CD4-positive, alpha-beta T cell (primary cell): ENCODE measurements at regions of chr1 and their contacts with region 1.

Region 1: GRCh38 chr1:89641781-89642180 is 8.9 kb downstream of the LRRC8C start:
- DNase-seq: no peak
- ATAC-seq: no peak
- H3K4me3 ChIP-seq: no peak overlapping the region
- H3K4me3 Mint-ChIP-seq: no peak overlapping the region
- H3K27ac ChIP-seq: no peak overlapping the region
- H3K27ac Mint-ChIP-seq: peak overlapping the region; percentile 60
- H3K4me1 ChIP-seq: peaks cover 26% of the 10 kb centered on the region
- H3K4me1 Mint-ChIP-seq: peaks cover 76% of the 10 kb centered on the region
- H3K27me3 ChIP-seq: no peaks in the 10 kb centered on the region
- H3K27me3 Mint-ChIP-seq: no peaks in the 10 kb centered on the region
- CTCF ChIP-seq: no peak

Region 2: DNA sequence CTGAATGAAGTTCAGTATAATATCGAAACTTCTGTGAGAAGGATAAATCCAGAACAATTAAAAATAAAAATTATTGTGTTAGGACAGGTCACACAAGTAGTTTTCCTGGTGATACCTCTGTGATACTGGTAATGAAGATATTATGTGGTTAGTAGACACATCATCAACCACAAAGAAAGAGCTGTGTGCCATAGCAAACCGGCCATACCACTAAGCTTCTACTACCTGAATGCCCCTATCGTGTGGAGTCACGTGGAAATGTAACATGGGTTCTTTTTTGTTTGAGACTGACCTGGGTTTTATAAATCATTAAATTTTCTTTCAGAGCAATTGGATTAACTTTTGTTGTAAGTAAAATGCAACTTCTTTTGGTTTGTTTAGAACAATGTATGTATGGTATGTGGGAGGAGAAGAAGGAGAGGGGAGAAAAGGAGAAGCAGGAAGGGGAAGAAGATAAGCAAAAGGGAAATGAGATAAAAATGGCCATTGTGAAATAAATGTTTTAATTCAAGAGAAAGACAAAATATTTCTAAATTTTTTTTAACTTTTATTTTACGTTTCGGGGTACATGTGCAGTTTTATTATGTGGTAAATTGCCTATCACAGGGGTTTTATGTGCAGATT is 175.4 kb before region 1 on chr1:
- CTCF ChIA-PET with region 1: no interaction called
- POLR2A ChIA-PET with region 1: no interaction called
- intact Hi-C with region 1: no loop called
- DNase-seq: no peak
- ATAC-seq: no peak
- H3K4me3 ChIP-seq: no peak overlapping the region
- H3K4me3 Mint-ChIP-seq: no peak overlapping the region
- H3K27ac ChIP-seq: no peak overlapping the region
- H3K27ac Mint-ChIP-seq: no peak overlapping the region
- H3K4me1 ChIP-seq: peaks cover 6% of the 10 kb centered on the region
- H3K4me1 Mint-ChIP-seq: peaks cover 21% of the 10 kb centered on the region
- H3K27me3 ChIP-seq: peaks cover 6 to 31% of the 10 kb centered on the region in 2 experiments
- H3K27me3 Mint-ChIP-seq: peaks cover 54% of the 10 kb centered on the region
- CTCF ChIP-seq: no peak

Region 3: DNA sequence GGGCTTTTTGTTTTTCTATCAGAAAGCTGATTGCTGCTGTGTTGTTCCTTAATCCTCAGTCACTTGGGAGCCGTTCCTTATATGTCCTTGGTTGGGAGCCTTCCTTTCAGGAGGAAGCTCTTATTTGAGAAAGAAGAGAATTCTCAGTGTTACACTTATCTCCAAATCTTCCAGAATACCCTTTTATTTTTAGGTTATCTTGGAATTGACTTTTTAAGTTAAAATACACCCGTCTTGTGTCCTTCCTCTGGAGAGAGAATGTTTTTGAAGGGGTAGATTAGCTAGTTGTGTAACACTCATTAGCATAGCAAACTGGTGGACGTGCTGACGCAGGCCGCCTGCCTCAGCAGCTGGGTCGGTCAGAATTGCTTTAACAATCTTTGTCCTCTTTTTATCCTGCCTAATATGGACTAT is 75.0 kb before region 1 on chr1:
- CTCF ChIA-PET with region 1: no interaction called
- POLR2A ChIA-PET with region 1: no interaction called
- intact Hi-C with region 1: no loop called
- DNase-seq: no peak
- ATAC-seq: no peak
- H3K4me3 ChIP-seq: no peak overlapping the region
- H3K4me3 Mint-ChIP-seq: no peak overlapping the region
- H3K27ac ChIP-seq: no peak overlapping the region
- H3K27ac Mint-ChIP-seq: no peak overlapping the region
- H3K4me1 ChIP-seq: no peaks in the 10 kb centered on the region
- H3K4me1 Mint-ChIP-seq: peaks cover 60% of the 10 kb centered on the region
- H3K27me3 ChIP-seq: no peaks in the 10 kb centered on the region
- H3K27me3 Mint-ChIP-seq: no peaks in the 10 kb centered on the region
- CTCF ChIP-seq: no peak

Region 4: GRCh38 chr1:89675677-89676076 is 33.9 kb after region 1 on chr1:
- CTCF ChIA-PET with region 1: interaction called, 3 read pairs
- POLR2A ChIA-PET with region 1: no interaction called
- intact Hi-C with region 1: loop called in 1 of 2 experiments (anchors 5 kb)
- DNase-seq: no peak
- ATAC-seq: no peak
- H3K4me3 ChIP-seq: no peak overlapping the region
- H3K4me3 Mint-ChIP-seq: no peak overlapping the region
- H3K27ac ChIP-seq: no peak overlapping the region
- H3K27ac Mint-ChIP-seq: peak overlapping the region; percentile 67
- H3K4me1 ChIP-seq: peaks cover 28% of the 10 kb centered on the region
- H3K4me1 Mint-ChIP-seq: peaks cover 86% of the 10 kb centered on the region
- H3K27me3 ChIP-seq: no peaks in the 10 kb centered on the region
- H3K27me3 Mint-ChIP-seq: no peaks in the 10 kb centered on the region
- CTCF ChIP-seq: no peak

Region 5: DNA sequence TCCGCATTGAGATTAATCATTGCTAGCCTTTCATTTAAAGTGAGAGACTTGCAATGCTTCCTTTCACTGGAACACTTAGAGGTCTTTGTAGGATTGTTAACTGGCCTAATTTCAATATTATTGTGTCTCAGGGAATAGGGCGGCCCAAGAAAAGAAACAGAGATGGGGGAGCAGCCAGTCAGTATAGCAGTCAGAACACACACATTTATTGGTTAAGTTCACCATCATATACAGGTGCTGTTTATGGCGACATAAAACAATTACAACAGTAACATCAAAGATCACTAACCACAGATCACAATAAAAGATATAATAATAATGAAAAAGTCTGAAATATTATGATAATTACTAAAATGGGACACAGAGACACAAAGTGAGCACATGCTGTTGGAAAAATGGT is 1046.0 kb after region 1 on chr1:
- CTCF ChIA-PET with region 1: no interaction called
- POLR2A ChIA-PET with region 1: no interaction called
- intact Hi-C with region 1: no loop called
- DNase-seq: no peak
- ATAC-seq: no peak
- H3K4me3 ChIP-seq: no peak overlapping the region
- H3K4me3 Mint-ChIP-seq: no peak overlapping the region
- H3K27ac ChIP-seq: no peak overlapping the region
- H3K27ac Mint-ChIP-seq: no peak overlapping the region
- H3K4me1 ChIP-seq: no peaks in the 10 kb centered on the region
- H3K4me1 Mint-ChIP-seq: no peaks in the 10 kb centered on the region
- H3K27me3 ChIP-seq: peaks cover 5 to 30% of the 10 kb centered on the region in 2 experiments
- H3K27me3 Mint-ChIP-seq: peaks cover 53% of the 10 kb centered on the region
- CTCF ChIP-seq: no peak